T47D (cell line): ENCODE measurements at regions of chr4 and their contacts with region 1.

Region 1: GRCh38 chr4:74376888-74377483 is 12.0 kb downstream of the EREG start:
- DNase-seq: peak; percentile 24 to 69

Region 2: DNA sequence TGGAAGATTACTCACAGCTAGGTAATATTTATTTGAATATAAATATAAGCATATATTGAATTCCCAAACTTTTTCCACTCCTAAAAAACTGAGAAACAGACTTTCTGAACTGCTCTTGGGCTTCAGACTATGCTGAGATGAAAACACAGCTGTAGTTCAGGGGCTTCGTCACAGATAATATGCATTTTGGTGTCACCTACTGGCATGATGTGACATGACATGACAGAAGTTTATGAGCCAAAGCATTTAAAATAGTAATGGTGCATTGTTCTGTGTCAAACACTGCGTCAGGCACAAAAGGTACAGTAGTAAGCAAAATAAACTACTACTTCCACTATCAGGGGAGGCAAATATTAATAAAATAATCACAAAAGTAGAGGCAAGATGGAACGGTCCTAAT is 246.1 kb after region 1 on chr4:
- in situ Hi-C with region 1: loop called (anchors 25 kb)
- DNase-seq: peak; percentile 2 to 80